Mucosa of descending colon (tissue), 3 donors: ENCODE measurements at regions of chr5 and their contacts with region 1.

Region 1: DNA sequence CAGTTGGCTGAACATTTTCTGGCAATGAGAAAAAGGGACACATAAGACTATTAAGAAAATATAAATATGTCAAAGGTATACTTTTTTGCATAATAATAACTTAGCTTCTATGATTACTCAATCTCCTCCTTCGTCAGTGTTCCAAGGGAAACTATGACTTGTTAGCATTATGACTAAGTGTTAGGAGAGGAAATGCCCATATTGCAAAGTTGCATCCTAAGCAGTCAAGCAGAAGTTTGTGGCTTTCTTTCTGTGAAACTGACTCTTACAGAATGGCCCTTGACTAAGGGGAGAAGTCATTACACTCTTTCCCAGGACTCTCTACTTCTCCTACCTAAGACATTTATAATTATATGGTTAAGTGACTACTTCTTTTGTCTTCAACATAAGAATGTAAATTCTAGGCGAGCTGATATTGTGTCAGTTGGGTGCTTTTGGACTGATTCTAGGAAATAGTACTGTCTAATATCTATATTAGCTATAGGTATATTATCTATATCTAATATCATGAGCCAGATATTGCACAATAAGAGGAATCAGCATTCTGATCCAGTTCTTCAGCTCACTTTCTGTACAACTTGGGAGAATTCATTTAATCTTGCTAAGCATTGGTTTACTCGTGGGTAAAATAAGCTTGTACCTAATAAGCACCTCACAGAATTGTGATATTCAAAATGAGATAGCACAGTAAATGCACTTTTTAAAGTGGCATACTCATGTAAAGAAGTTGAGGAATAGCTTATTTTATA is 16.4 kb upstream of the SPINK6 start:
- DNase-seq: no peak
- ATAC-seq: peak; percentile 48
- H3K4me3 ChIP-seq: no peak overlapping the region
- H3K4me1 ChIP-seq: no peaks in the 10 kb centered on the region
- CTCF ChIP-seq: no peak

Region 2: DNA sequence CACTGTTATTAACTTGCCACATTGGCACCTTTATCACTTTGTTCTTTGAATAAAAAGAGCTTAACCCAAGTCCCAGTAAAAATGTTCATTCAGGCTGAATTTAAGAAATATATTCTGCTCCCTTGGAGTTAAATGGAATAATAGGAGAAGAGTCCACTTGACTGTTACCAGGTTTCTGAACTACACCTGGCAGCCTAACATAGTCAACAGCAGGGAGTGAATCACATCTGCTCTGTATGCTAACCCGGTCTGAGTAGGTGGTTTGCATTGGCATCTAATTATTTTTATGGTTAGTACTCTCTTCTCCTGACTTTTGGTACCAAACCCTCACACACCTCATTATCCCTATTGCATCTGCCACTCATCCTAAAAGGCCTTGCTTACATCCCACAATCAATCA is 864.9 kb before region 1 on chr5:
- intact Hi-C with region 1: no loop called
- DNase-seq: no peak
- ATAC-seq: no peak
- H3K4me3 ChIP-seq: no peak overlapping the region
- H3K4me1 ChIP-seq: no peaks in the 10 kb centered on the region
- CTCF ChIP-seq: no peak

Region 3: DNA sequence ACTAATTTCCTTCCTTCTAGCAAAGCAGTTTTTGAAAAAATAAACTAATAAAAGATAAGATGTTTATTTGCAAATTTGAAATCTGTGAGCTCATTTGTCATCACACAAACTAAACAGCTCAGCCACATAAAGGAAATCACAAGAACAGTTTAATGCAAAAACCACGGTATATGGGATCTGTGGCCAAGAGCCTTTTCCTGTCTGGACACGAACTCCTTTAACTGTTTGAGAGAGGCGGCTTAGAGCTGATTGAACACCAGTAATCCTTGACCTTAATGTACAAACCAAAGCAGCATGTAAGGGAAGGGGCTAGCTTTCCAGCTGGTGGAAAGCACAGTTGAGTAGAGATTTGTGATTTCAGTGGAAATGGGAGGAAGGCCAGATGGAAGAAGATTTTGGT is 188.9 kb before region 1 on chr5:
- intact Hi-C with region 1: no loop called
- DNase-seq: no peak
- ATAC-seq: no peak
- H3K4me3 ChIP-seq: no peak overlapping the region
- H3K4me1 ChIP-seq: no peaks in the 10 kb centered on the region
- CTCF ChIP-seq: no peak

Region 4: DNA sequence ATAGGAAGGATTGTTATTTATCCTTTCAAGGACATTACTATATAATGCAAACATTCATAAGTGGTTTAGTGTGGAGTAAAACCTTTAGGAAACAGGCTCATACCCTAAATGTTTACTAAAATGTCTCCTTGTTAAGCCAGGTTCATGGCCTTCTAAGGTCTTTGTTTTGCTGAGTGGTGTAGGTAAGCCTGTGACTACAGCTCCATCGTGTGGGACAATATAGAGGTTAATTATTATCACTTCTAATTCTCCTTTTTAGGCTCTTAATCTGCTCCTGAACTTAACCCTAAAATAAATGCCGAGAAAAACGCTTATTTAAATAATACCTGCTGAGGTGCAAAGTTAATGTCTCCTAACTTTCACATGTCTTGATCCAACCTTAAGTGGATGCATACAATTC is 78.8 kb before region 1 on chr5:
- intact Hi-C with region 1: no loop called
- DNase-seq: peak in 1 of 3 donors; percentile 18
- ATAC-seq: peak; percentile 39
- H3K4me3 ChIP-seq: no peak overlapping the region
- H3K4me1 ChIP-seq: no peaks in the 10 kb centered on the region
- CTCF ChIP-seq: no peak

Region 5: GRCh38 chr5:148374692-148375360 is 188.4 kb after region 1 on chr5:
- intact Hi-C with region 1: loop called (anchors 10 kb)
- DNase-seq: peak in 1 of 3 donors; percentile 64
- ATAC-seq: peak; percentile 93
- H3K4me3 ChIP-seq: no peak overlapping the region
- H3K4me1 ChIP-seq: peaks cover 6% of the 10 kb centered on the region
- CTCF ChIP-seq: peak; percentile 46